H1 (cell line): ENCODE measurements at regions of chr7 and their contacts with region 1.

Region 1: DNA sequence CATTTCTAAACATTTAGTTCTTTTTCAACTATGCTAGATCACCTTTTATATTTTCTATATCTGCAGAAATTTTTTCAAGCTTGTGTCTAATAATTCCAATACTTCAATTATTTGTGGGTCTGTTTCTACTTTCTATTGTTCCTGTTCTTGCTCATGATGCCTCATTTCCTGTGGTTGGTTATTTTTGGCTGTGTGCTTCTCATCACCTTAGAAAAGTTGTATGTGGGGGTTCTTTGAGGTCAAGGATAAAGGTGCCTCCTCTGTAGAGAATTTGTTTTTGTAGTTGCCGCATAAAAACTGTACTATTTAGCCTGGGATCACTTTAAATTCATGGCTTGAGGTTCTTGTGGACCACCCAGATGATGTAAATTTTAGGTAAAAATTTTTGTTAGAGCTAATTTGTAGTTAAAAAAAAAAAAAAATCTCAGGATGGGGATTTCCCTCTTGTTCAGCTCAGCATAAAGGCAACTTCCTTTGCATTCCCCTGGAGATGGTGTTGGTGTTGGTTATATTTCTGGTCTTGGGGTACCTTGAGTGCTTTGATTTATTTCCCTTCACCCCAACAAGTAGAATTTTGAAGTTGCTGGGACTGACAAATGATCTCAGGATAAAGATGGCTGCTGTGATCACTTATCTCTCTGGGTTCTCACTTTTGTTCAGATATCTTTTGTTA is 27.0 kb upstream of the JAZF1 start:
- DNase-seq: no peak
- H3K4me3 ChIP-seq: no peak overlapping the region
- H3K27ac ChIP-seq: no peak overlapping the region
- H3K4me1 ChIP-seq: no peaks in the 10 kb centered on the region
- H3K27me3 ChIP-seq: no peaks in the 10 kb centered on the region
- CTCF ChIP-seq: no peak
- EP300 ChIP-seq: no peak
- POLR2A ChIP-seq: no peak
- RAD21 ChIP-seq: no peak

Region 2: GRCh38 chr7:28155019-28155660 is 52.5 kb before region 1 on chr7:
- CTCF ChIA-PET with region 1: no interaction called
- POLR2A ChIA-PET with region 1: no interaction called
- DNase-seq: no peak
- H3K4me3 ChIP-seq: no peak overlapping the region
- H3K27ac ChIP-seq: no peak overlapping the region
- H3K4me1 ChIP-seq: 0 out of 7 replicates have a peak, but pooled peaks cover 0 to 6% (median 0%) of the 10 kb centered on the region in 4 experiments
- H3K27me3 ChIP-seq: no peaks in the 10 kb centered on the region
- CTCF ChIP-seq: no peak
- EP300 ChIP-seq: no peak
- POLR2A ChIP-seq: no peak
- RAD21 ChIP-seq: no peak

Region 3: DNA sequence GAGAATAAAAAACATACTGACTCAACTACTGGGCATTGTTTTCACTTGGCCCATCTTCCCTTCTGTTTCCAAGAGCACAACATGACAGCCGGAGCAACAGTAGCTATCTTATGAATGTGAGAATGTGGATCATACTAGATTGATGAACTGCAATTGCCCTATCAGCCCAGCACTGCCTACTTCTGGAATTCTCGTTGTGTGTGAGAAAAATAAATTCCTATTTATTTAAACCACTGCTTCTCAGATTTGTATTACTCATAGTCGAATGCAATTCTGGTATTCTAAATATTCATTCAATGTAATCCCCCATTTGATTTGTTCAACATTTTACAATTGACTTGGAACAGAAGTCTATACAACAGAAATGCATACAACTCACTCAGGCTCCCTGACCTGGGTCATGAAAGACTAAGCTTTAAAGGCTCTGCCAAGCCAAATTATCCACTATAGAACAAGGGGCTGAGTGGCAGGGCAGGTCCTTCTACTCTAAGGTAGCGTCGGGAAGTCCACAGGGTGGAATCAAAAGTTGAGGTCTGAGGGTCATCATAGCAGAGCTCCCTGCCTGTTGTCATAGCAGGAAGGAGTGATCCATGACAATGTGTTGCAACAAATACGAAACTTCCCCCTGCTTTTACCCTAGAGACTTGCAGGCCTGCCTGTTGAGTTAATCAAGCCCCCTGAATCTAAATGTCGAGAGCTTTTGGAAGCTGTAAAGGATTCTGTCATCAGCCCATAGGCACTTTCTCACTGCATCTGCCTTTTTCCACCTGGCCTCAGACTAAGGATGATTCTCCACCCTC is 14.6 kb before region 1 on chr7:
- CTCF ChIA-PET with region 1: interaction called, 24 read pairs
- POLR2A ChIA-PET with region 1: no interaction called
- DNase-seq: no peak
- H3K4me3 ChIP-seq: no peak overlapping the region
- H3K27ac ChIP-seq: no peak overlapping the region; the same call in 1 of the 2 replicates
- H3K4me1 ChIP-seq: peaks cover 0 to 6% (median 3%) of the 10 kb centered on the region in 4 experiments; a peak in 3 of 7 replicates
- H3K27me3 ChIP-seq: no peaks in the 10 kb centered on the region; a peak in 1 of 7 replicates
- CTCF ChIP-seq: no peak
- EP300 ChIP-seq: no peak
- POLR2A ChIP-seq: no peak
- RAD21 ChIP-seq: no peak

Region 4: GRCh38 chr7:28354601-28355402 is 147.2 kb after region 1 on chr7:
- CTCF ChIA-PET with region 1: no interaction called
- POLR2A ChIA-PET with region 1: no interaction called
- DNase-seq: no peak
- H3K4me3 ChIP-seq: no peak overlapping the region
- H3K27ac ChIP-seq: no peak overlapping the region
- H3K4me1 ChIP-seq: peaks cover 4 to 12% (median 10%) of the 10 kb centered on the region in 4 experiments
- H3K27me3 ChIP-seq: 0 out of 7 replicates have a peak, but pooled peaks cover 0 to 3% (median 0%) of the 10 kb centered on the region in 4 experiments
- CTCF ChIP-seq: no peak
- EP300 ChIP-seq: no peak
- POLR2A ChIP-seq: no peak
- RAD21 ChIP-seq: no peak